T-cell (primary cell): ENCODE measurements at regions of chr16 and their contacts with region 1.

Region 1: DNA sequence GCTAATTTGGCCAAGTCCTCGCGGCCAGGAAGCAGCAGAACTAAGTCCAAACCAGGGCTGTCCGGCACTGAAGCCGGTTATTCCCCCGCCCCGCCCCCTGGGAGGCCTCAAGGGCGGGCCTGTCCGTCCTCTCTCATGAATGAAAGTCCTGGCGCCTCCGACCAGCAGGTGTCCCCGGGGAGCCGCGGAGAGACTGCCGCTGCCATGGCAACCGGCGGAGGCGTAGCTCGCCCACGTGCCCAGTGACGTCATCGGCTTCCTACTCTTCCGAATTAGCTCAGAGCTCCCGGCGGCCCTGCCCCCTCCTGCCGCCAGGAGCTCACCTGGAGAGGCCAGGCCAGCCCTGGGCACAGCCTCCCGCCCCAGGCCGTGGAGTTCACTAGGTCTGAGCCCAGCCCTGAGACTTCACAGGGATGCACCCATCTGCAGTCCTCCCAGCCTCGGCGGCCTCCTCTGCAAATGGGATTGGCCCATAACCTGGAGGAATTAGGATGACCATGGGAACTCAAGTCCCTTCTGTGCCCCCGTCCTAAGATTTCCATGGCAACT is 1.3 kb downstream of the SPATA2L start:
- DNase-seq: peak; percentile 82 to 99 (median 93)
- ATAC-seq: peak; percentile 10 to 38 (median 18)
- H3K4me3 ChIP-seq: peak overlapping the region; percentile 71
- H3K4me3 Mint-ChIP-seq: peak overlapping the region; percentile 63 to 77 (median 69)
- H3K27ac ChIP-seq: peak overlapping the region; percentile 86
- H3K27ac Mint-ChIP-seq: peak overlapping the region; percentile 43 to 66
- H3K4me1 ChIP-seq: peaks cover 4 to 49% of the 10 kb centered on the region in 2 experiments
- H3K4me1 Mint-ChIP-seq: peaks cover 5 to 36% (median 23%) of the 10 kb centered on the region in 3 donors
- H3K27me3 ChIP-seq: peaks cover 0 to 2% of the 10 kb centered on the region in 2 experiments
- H3K27me3 Mint-ChIP-seq: no peaks in the 10 kb centered on the region

Region 2: DNA sequence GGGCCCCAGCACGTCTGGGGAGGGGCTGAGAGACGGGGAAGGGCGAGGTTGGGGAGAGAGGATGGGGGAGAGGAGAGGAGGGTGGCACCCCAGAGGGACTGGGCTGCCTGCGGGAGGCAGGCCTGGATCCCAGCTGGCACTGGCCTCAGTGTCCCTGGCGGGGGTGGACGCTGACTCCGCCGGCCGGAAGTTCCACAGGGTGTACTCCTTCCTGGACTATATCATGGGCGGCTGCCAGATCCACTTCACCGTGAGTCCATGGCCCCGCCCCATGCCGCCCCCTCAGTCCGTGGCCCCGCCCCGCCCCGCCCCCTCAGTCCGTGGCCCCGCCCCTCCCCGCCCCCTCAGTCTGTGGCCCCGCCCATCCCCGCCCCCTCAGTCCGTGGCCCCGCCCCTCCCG is 113.3 kb before region 1 on chr16:
- CTCF ChIA-PET with region 1: no interaction called
- POLR2A ChIA-PET with region 1: no interaction called
- DNase-seq: peak in 3 of 35 experiments; percentile 26 to 47 (median 34)
- ATAC-seq: peak in 2 of 4 experiments; percentile 24 to 54
- H3K4me3 ChIP-seq: no peak overlapping the region
- H3K4me3 Mint-ChIP-seq: no peak overlapping the region
- H3K27ac ChIP-seq: no peak overlapping the region
- H3K27ac Mint-ChIP-seq: no peak overlapping the region
- H3K4me1 ChIP-seq: no peaks in the 10 kb centered on the region
- H3K4me1 Mint-ChIP-seq: no peaks in the 10 kb centered on the region
- H3K27me3 ChIP-seq: peaks cover 0 to 4% of the 10 kb centered on the region in 2 experiments
- H3K27me3 Mint-ChIP-seq: no peaks in the 10 kb centered on the region

Region 3: DNA sequence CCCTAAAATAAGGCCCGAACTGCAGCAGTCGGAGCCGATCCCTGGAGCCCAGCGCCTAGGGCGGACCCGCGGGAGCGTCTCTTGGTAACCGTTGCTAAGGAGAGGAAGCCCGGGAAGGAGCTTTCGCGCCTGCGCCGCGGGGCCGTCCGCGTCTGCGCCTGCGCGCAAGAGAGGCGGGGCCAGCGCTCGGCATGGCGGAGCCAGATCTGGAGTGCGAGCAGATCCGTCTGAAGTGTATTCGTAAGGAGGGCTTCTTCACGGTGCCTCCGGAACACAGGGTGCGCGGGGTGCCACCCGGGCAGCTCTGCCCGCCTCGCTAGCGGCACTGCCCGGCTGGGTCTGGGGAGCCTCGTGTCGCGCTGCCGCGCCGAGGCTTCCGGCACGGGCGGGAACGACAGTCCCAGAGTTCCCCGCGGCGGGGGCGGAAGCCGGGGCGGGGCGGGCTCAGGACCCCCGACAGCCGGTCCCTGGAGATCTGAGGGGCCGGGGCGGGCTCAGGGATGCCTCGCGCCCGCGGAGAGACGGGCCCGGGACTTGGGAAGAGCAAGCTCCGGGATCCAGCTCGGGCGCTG is 13.6 kb before region 1 on chr16 and contains the start of gene CDK10:
- CTCF ChIA-PET with region 1: interaction called in 1 of 2 experiments, 18 read pairs
- POLR2A ChIA-PET with region 1: no interaction called
- DNase-seq: peak; percentile 63 to 91 (median 79)
- ATAC-seq: peak; percentile 91 to 95 (median 94)
- H3K4me3 ChIP-seq: peak within 1 kb of the TSS; percentile 67 to 90
- H3K4me3 Mint-ChIP-seq: peak within 1 kb of the TSS; percentile 86 to 94 (median 91)
- H3K27ac ChIP-seq: peak within 1 kb of the TSS; percentile 63
- H3K27ac Mint-ChIP-seq: peak within 1 kb of the TSS; percentile 91
- H3K4me1 ChIP-seq: peaks cover 7 to 20% of the 10 kb centered on the region in 2 experiments
- H3K4me1 Mint-ChIP-seq: peaks cover 15 to 19% (median 17%) of the 10 kb centered on the region in 3 donors
- H3K27me3 ChIP-seq: no peaks in the 10 kb centered on the region
- H3K27me3 Mint-ChIP-seq: no peaks in the 10 kb centered on the region
- total RNA-seq, gene CDK10: 108 to 163 (median 138) TPM

Region 4: DNA sequence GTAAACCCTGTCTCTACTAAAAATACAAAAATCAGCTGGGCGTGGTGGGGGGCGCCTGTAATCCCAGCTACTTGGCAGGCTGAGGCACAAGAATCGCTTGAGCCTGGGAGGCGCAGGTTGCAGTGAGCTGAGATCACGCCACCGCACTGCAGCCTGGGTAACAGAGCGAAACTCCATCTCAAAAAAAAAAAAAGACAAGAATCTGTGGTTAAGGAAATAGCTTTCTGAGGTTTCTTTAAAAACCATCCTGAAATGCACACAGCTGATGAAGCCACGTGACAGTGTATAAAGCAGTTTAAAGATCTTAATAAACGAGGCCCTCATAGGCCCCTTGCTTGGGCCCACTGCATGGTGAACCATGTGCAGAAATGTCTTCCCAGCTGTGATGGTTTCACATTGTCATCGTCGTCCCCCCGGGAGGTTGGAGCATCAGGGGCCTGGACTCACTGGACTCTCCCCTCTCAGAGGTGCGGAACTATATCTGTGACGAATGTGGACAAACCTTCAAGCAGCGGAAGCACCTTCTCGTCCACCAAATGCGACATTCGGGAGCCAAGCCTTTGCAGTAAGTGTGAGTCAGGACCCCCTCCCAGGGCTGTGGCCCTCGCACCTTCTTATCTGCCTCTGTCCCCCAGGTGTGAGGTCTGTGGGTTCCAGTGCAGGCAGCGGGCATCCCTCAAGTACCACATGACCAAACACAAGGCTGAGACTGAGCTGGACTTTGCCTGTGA is 37.3 kb after region 1 on chr16:
- CTCF ChIA-PET with region 1: interaction called in 1 of 2 experiments, 14 read pairs
- POLR2A ChIA-PET with region 1: interaction called in 1 of 2 experiments, 3 read pairs
- DNase-seq: peak in 33 of 35 experiments; percentile 32 to 77 (median 50)
- ATAC-seq: peak; percentile 54 to 86 (median 61)
- H3K4me3 ChIP-seq: no peak overlapping the region
- H3K4me3 Mint-ChIP-seq: peak overlapping the region in 2 of 3 donors; percentile 3 to 53
- H3K27ac ChIP-seq: peak overlapping the region; percentile 36
- H3K27ac Mint-ChIP-seq: peak overlapping the region; percentile 65 to 80
- H3K4me1 ChIP-seq: peaks cover 21 to 71% of the 10 kb centered on the region in 2 experiments
- H3K4me1 Mint-ChIP-seq: peaks cover 44 to 64% (median 46%) of the 10 kb centered on the region in 3 donors
- H3K27me3 ChIP-seq: no peaks in the 10 kb centered on the region
- H3K27me3 Mint-ChIP-seq: no peaks in the 10 kb centered on the region

Region 5: GRCh38 chr16:89873972-89874689 is 174.0 kb after region 1 on chr16:
- CTCF ChIA-PET with region 1: interaction called, 3 to 11 read pairs
- POLR2A ChIA-PET with region 1: interaction called in 1 of 2 experiments, 3 read pairs
- DNase-seq: peak; percentile 80 to 97 (median 95)
- ATAC-seq: peak; percentile 72 to 84 (median 78)
- H3K4me3 ChIP-seq: peak overlapping the region; percentile 10 to 99
- H3K4me3 Mint-ChIP-seq: peak overlapping the region; percentile 86 to 92 (median 86)
- H3K27ac ChIP-seq: peak overlapping the region; percentile 100
- H3K27ac Mint-ChIP-seq: peak overlapping the region; percentile 95 to 96
- H3K4me1 ChIP-seq: peaks cover 4 to 27% of the 10 kb centered on the region in 2 experiments
- H3K4me1 Mint-ChIP-seq: peaks cover 23 to 25% (median 25%) of the 10 kb centered on the region in 3 donors
- H3K27me3 ChIP-seq: no peaks in the 10 kb centered on the region
- H3K27me3 Mint-ChIP-seq: no peaks in the 10 kb centered on the region